Gastrocnemius medialis (tissue), 4 donors: ENCODE measurements at regions of chr22 and their contacts with region 1.

Region 1: GRCh38 chr22:46542011-46542985 is 4.9 kb upstream of the CELSR1 start:
- DNase-seq: peak in 1 of 2 donors; percentile 39
- ATAC-seq: peak; percentile 55 to 73
- H3K4me3 ChIP-seq: no peak overlapping the region
- H3K27ac ChIP-seq: no peak overlapping the region
- H3K4me1 ChIP-seq: peaks cover 5 to 9% of the 10 kb centered on the region in 2 donors
- H3K27me3 ChIP-seq: peaks cover 19 to 27% (median 24%) of the 10 kb centered on the region in 3 donors
- CTCF ChIP-seq: peak; percentile 53 to 84 (median 75)
- POLR2A ChIP-seq: no peak

Region 2: DNA sequence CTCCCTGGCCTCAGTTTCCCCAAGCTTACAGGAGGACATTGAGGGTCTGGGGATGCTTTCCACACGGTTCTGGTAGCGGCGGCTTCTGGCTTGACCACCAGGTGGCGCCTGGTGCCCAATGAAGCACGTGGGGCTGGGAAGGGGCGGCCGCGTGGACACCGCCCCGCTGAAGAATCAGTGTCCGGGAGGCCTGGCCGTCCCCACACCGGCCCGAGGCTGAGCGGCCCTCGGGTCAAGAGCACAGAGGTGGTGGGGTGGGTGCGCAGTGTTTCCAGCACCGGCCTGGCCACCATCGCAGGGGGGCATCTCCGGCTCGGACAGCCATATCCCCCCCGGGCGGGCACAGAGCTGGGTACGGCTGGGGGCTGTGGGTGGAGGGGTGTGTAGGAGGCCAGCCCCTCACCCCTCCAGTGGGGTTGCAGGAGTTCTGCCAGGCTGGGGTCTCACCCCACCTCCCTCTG is 419.8 kb before region 1 on chr22:
- in situ Hi-C with region 1: loop called in 1 of 4 experiments (anchors 25 kb)
- intact Hi-C with region 1: loop called (anchors 10 kb)
- DNase-seq: peak in 1 of 2 donors; percentile 65
- ATAC-seq: peak; percentile 52 to 72
- H3K4me3 ChIP-seq: peak overlapping the region in 1 of 4 donors; percentile 29
- H3K27ac ChIP-seq: no peak overlapping the region
- H3K4me1 ChIP-seq: peaks cover 4% of the 10 kb centered on the region in 2 donors
- H3K27me3 ChIP-seq: no peaks in the 10 kb centered on the region
- CTCF ChIP-seq: peak; percentile 94 to 99 (median 98)
- POLR2A ChIP-seq: no peak

Region 3: GRCh38 chr22:46150034-46150654 is 392.2 kb before region 1 on chr22 and contains the start of gene PPARA:
- in situ Hi-C with region 1: loop called in 1 of 4 experiments (anchors 25 kb)
- intact Hi-C with region 1: no loop called
- DNase-seq: peak; percentile 85 to 90
- ATAC-seq: peak; percentile 75 to 81
- H3K4me3 ChIP-seq: peak within 1 kb of the TSS; percentile 83 to 92 (median 86)
- H3K27ac ChIP-seq: peak within 1 kb of the TSS; percentile 96 to 98 (median 98)
- H3K4me1 ChIP-seq: peaks cover 35 to 40% of the 10 kb centered on the region in 2 donors
- H3K27me3 ChIP-seq: no peaks in the 10 kb centered on the region
- CTCF ChIP-seq: no peak
- POLR2A ChIP-seq: peak; percentile 83 to 84
- total RNA-seq, gene PPARA: 29.6 to 74.8 (median 57.9) TPM

Region 4: GRCh38 chr22:46355371-46355995 is 186.8 kb before region 1 on chr22:
- in situ Hi-C with region 1: loop called in 2 of 4 experiments (anchors 10 to 25 kb)
- intact Hi-C with region 1: no loop called
- DNase-seq: peak in 1 of 2 donors; percentile 38
- ATAC-seq: peak in 1 of 2 donors; percentile 39
- H3K4me3 ChIP-seq: no peak overlapping the region
- H3K27ac ChIP-seq: no peak overlapping the region
- H3K4me1 ChIP-seq: peaks cover 5% of the 10 kb centered on the region in 2 donors
- H3K27me3 ChIP-seq: no peaks in the 10 kb centered on the region
- CTCF ChIP-seq: peak; percentile 33 to 71 (median 60)
- POLR2A ChIP-seq: no peak

Region 5: GRCh38 chr22:46367707-46368191 is 174.5 kb before region 1 on chr22:
- in situ Hi-C with region 1: loop called in 2 of 4 experiments (anchors 10 to 25 kb)
- intact Hi-C with region 1: loop called (anchors 1 kb)
- DNase-seq: peak in 1 of 2 donors; percentile 44
- ATAC-seq: peak; percentile 62 to 85
- H3K4me3 ChIP-seq: no peak overlapping the region
- H3K27ac ChIP-seq: no peak overlapping the region
- H3K4me1 ChIP-seq: no peaks in the 10 kb centered on the region
- H3K27me3 ChIP-seq: peaks cover 7 to 19% (median 17%) of the 10 kb centered on the region in 3 donors
- CTCF ChIP-seq: peak; percentile 57 to 90 (median 86)
- POLR2A ChIP-seq: no peak

Region 6: GRCh38 chr22:46390652-46391301 is 151.5 kb before region 1 on chr22:
- in situ Hi-C with region 1: loop called in 1 of 4 experiments (anchors 25 kb)
- intact Hi-C with region 1: no loop called
- DNase-seq: peak; percentile 52 to 71
- ATAC-seq: peak; percentile 89 to 91
- H3K4me3 ChIP-seq: peak overlapping the region; percentile 44 to 55 (median 51)
- H3K27ac ChIP-seq: peak overlapping the region; percentile 50 to 72 (median 70)
- H3K4me1 ChIP-seq: peaks cover 7 to 11% of the 10 kb centered on the region in 2 donors
- H3K27me3 ChIP-seq: no peaks in the 10 kb centered on the region
- CTCF ChIP-seq: peak in 4 of 5 experiments; percentile 45 to 59 (median 49)
- POLR2A ChIP-seq: no peak

Region 7: DNA sequence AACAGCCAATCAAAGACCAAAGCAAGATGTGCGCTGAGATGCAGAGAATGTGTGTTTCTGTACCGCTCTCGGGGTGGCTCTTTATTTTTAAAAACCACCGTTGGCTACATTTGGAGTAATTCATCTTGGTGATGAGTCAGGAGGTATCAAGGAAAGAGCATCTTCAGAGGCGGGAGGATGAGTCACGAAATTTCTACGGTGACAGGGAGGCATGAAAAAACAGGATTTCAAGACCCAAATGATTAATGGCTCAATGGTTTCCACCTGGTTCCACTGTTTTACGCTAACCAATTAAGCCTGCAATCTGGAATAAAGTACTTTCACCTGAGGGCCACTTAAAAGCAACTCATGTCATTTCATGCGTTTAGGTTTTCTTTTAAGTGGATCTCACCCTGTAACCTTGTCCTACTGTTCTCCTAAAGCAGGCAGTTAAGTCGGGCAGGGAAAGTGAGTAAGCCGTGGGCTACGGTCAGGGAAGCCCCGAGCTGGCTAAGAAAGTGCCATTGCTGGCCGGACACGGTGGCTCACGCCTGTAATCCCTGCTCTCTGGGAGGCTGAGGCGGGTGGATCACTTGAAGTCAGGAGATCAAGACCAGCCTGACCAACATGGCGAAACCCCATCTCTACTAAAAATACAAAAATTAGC is 79.4 kb before region 1 on chr22:
- in situ Hi-C with region 1: no loop called
- intact Hi-C with region 1: no loop called
- DNase-seq: no peak
- ATAC-seq: no peak
- H3K4me3 ChIP-seq: no peak overlapping the region
- H3K27ac ChIP-seq: no peak overlapping the region
- H3K4me1 ChIP-seq: no peaks in the 10 kb centered on the region
- H3K27me3 ChIP-seq: peaks cover 4 to 26% (median 15%) of the 10 kb centered on the region in 3 donors
- CTCF ChIP-seq: no peak
- POLR2A ChIP-seq: no peak

Region 8: DNA sequence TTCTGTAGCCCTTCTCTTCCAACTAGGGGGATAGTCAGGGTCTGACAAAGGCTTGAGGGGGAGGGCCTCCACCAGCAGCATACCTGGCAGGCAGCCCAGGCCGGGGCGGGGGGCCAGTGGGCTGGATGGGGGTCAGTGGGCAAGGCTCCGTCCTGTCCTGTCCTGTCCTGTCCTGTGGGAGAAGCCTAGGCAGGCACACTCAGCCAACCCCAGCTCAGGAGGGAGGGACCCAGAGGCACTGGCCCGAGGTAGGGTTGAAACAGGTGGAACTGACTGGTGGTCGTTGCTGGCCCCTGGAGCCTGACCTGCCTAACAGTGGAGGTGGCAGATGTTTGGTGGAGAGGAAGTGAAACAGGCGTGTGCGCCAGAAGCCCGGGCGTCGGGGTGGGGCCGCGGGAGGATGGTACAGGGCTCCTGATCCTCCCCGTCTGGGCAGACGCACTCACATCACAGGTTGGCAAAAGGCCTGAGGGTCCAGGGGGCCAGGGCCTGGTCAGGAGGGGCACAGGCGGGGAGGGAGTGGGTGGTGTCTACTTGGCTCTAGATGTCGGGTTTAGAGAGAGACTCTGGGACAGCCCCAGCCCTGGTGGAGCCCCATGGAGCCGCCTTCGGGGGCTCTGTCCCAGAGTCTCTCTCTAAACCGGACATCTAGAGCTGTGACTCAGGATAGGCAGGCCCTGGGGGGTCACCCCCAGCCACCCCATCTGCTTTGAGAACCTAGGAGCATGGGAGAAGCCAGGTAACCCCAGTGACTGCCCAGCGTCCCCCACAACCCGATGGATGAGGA is 45.4 kb after region 1 on chr22:
- in situ Hi-C with region 1: no loop called
- intact Hi-C with region 1: no loop called
- DNase-seq: no peak
- ATAC-seq: no peak
- H3K4me3 ChIP-seq: no peak overlapping the region
- H3K27ac ChIP-seq: peak overlapping the region in 1 of 4 donors; percentile 67
- H3K4me1 ChIP-seq: peaks cover 7 to 37% of the 10 kb centered on the region in 2 donors
- H3K27me3 ChIP-seq: no peaks in the 10 kb centered on the region
- CTCF ChIP-seq: no peak
- POLR2A ChIP-seq: no peak